Ovary (tissue), 10 donors: ENCODE measurements at regions of chr5 and their contacts with region 1.

Region 1: GRCh38 chr5:169548315-169548714 is 35.3 kb upstream of the SPDL1 start:
- DNase-seq: no peak
- H3K4me3 ChIP-seq: no peak overlapping the region
- H3K27ac ChIP-seq: no peak overlapping the region
- H3K4me1 ChIP-seq: no peaks in the 10 kb centered on the region
- H3K27me3 ChIP-seq: no peaks in the 10 kb centered on the region
- CTCF ChIP-seq: peak in 1 of 3 donors; percentile 50
- EP300 ChIP-seq: no peak
- POLR2A ChIP-seq: no peak

Region 2: DNA sequence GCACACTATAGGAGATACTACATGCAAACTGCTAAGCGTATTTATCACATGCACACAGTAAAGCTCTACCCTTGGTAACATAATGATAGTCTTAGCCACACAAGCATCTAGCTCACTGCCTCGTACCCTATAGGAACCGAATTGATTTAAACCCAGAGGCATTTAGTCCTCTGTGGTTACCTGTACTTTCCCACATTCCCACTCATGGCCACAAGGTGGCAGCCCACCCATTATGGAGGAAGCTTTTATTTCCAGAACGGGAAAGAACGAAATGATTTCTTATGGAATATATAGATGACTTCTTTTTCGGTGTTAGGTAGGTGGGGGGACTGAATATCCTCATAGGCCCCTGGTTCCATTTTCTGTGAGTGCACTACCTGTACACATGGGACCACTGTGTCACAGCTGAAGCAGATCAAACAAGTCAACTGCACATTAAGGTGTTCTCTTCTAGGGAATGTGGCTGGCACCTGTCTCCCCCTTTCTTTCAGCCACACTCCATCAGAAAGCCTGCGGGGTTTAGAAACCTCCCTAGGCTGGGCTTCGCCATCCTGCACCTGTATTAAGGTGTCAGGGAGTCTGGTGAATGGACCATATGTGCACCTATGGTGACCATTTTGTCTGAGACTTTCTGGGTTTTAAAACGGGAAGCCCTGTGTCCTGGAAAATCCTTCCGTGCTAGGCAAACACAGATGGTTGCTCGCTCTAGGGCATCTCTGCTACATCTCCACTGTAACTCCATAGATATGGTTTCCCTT is 560.6 kb before region 1 on chr5:
- intact Hi-C with region 1: loop called in 2 of 4 experiments (anchors 10 kb)
- DNase-seq: peak; percentile 50 to 83 (median 80)
- H3K4me3 ChIP-seq: no peak overlapping the region
- H3K27ac ChIP-seq: no peak overlapping the region
- H3K4me1 ChIP-seq: no peaks in the 10 kb centered on the region
- H3K27me3 ChIP-seq: no peaks in the 10 kb centered on the region
- CTCF ChIP-seq: peak; percentile 70 to 85 (median 75)
- EP300 ChIP-seq: no peak
- POLR2A ChIP-seq: no peak

Region 3: DNA sequence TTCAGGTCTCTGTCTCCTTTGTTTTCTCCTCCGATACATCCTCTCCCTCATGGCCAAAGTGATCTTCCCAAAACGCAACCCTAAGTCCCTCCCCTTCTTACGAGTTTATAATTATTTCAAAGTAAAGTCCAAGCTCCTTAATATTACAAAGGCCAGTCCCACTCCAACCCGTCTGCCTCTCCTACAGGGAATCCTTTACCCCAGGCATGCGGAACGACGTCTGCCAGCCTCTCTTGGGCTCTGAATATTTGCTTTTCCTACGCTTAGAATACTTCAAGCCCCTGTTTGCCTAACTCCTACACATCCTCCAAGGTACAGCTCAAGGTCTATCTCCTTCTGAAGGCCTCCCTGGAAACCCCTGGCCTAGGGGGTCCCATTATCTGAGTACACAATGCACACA is 493.8 kb before region 1 on chr5:
- intact Hi-C with region 1: no loop called
- DNase-seq: no peak
- H3K4me3 ChIP-seq: no peak overlapping the region
- H3K27ac ChIP-seq: no peak overlapping the region
- H3K4me1 ChIP-seq: no peaks in the 10 kb centered on the region
- H3K27me3 ChIP-seq: no peaks in the 10 kb centered on the region
- CTCF ChIP-seq: no peak
- EP300 ChIP-seq: no peak
- POLR2A ChIP-seq: no peak

Region 4: GRCh38 chr5:169519358-169519757 is 29.0 kb before region 1 on chr5:
- intact Hi-C with region 1: loop called in 1 of 4 experiments (anchors 2 kb)
- DNase-seq: no peak
- H3K4me3 ChIP-seq: no peak overlapping the region
- H3K27ac ChIP-seq: no peak overlapping the region
- H3K4me1 ChIP-seq: no peaks in the 10 kb centered on the region
- H3K27me3 ChIP-seq: no peaks in the 10 kb centered on the region
- CTCF ChIP-seq: no peak
- EP300 ChIP-seq: no peak
- POLR2A ChIP-seq: no peak

Region 5: GRCh38 chr5:169838688-169839087 is 290.4 kb after region 1 on chr5:
- intact Hi-C with region 1: no loop called
- DNase-seq: no peak
- H3K4me3 ChIP-seq: no peak overlapping the region
- H3K27ac ChIP-seq: no peak overlapping the region
- H3K4me1 ChIP-seq: no peaks in the 10 kb centered on the region
- H3K27me3 ChIP-seq: no peaks in the 10 kb centered on the region
- CTCF ChIP-seq: no peak
- EP300 ChIP-seq: no peak
- POLR2A ChIP-seq: no peak

Region 6: DNA sequence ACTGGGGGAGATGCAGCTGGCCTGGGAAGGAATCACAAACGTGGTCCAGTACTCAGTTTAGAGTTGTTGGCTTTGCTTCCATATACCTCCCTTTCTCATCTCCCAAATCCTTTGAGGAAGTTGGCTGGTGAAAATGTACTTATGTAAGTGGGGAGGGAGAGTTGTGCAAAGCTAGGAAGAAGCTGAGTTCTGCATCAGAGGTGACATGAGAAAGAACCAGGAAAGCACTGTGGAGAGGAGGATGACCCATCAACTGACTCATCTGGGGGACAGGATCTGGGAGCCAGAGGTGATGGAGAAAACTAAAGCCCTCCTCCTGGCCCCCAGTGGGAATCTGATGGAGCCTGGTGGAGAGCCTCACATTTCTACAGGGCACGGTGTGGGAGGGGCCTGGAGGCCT is 824.7 kb after region 1 on chr5:
- intact Hi-C with region 1: no loop called
- DNase-seq: no peak
- H3K4me3 ChIP-seq: no peak overlapping the region
- H3K27ac ChIP-seq: no peak overlapping the region
- H3K4me1 ChIP-seq: no peaks in the 10 kb centered on the region
- H3K27me3 ChIP-seq: no peaks in the 10 kb centered on the region
- CTCF ChIP-seq: no peak
- EP300 ChIP-seq: no peak
- POLR2A ChIP-seq: no peak